ENCODE measurements at regions of chr7 and their contacts with region 1.

Region 1: DNA sequence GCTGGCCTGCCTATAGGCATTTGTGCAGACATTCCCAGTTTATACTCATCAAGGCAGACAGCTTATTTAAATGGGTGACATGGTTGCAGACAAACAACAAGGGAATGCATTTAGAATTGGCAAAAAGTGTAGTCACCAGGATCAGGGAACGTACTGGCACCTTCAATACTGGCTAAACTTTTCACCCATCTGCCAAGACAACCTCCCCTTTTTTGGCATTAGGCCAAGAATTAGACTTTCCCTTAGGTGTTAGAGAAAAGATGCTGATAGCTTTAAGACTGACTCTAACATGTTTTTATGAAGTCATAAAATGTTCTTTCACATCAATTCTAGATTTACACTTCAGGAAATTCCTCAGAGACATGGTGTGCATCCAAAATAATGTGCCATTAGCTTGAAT is 365.9 kb downstream of the PHTF2 start:
- DNase-seq: no peak
- ATAC-seq: no peak
- H3K4me3 ChIP-seq: no peak overlapping the region
- H3K27ac ChIP-seq: no peak overlapping the region
- H3K4me1 ChIP-seq: no peaks in the 10 kb centered on the region
- H3K27me3 ChIP-seq: peaks cover 7% of the 10 kb centered on the region; the same call in 1 of the 2 replicates
- CTCF ChIP-seq: no peak

Region 2: DNA sequence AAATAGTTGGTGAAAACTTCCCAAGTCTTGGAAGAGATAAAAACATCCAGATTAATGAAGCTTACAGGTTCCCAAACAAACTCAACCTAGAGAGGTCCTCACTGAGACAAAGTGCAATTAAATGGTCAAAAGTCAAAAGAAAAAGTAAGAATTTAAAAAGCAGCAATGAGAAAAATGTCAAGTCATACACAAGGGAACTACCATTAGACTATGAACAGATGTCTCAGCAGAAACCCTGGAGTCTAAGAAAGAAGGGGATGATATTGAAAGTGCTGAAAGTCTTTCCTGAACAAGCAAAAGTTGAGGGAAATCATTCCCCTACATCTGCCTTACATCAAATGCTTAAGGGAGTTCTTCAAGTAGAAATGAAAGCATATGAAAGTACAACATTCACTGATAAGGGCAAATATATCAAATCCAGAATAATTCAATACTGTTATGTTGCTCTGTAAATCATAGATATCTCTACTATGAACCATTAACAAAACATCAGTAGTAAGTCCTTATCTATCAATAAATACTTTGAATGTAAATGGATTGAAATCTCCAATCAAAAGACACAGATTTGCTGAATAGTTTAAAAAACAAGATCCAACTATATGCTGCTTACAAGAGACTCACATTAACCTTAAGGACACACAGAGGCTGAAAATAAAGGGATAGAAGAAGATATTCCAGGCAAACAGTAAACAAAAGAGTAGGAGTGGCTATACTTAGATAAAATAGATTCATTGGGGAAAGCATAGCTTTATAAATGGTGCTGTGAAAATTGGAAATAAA is 83.6 kb after region 1 on chr7:
- CTCF ChIA-PET with region 1: no interaction called
- POLR2A ChIA-PET with region 1: interaction called, 13 read pairs
- in situ Hi-C with region 1: no loop called
- intact Hi-C with region 1: no loop called
- DNase-seq: no peak
- ATAC-seq: no peak
- H3K4me3 ChIP-seq: no peak overlapping the region
- H3K27ac ChIP-seq: no peak overlapping the region
- H3K4me1 ChIP-seq: no peaks in the 10 kb centered on the region
- H3K27me3 ChIP-seq: no peaks in the 10 kb centered on the region
- CTCF ChIP-seq: no peak

Region 3: DNA sequence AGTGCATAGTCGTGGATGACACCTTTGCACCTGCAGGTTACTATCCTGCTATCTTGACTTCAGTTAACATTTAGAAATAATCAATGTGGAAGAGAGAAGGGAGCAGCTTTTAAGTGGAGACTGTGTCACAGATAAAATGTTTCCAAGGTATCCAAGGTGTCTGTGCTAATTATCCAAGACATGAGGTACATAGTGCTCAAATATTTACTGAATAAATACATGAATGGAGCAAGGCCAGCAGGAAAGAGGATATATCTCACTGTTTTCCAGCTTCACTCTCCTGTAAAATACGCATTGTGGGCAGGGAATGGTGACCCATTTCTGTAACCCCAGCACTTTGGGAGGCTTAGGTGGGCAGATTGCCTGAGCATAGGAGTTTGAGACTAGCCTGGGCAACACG is 186.5 kb after region 1 on chr7:
- CTCF ChIA-PET with region 1: no interaction called
- POLR2A ChIA-PET with region 1: no interaction called
- in situ Hi-C with region 1: no loop called
- intact Hi-C with region 1: no loop called
- DNase-seq: no peak
- ATAC-seq: no peak
- H3K4me3 ChIP-seq: no peak overlapping the region
- H3K27ac ChIP-seq: no peak overlapping the region
- H3K4me1 ChIP-seq: no peaks in the 10 kb centered on the region
- H3K27me3 ChIP-seq: peaks cover 15% of the 10 kb centered on the region; the same call in 1 of the 2 replicates
- CTCF ChIP-seq: no peak

Measured in Panc1 (cell line).